ENCODE measurements at regions of chr3 and their contacts with region 1.

Region 1: GRCh38 chr3:149512209-149512782 is 37.8 kb downstream of the TM4SF4 start:
- DNase-seq: peak; percentile 69
- H3K4me3 Mint-ChIP-seq: no peak overlapping the region
- H3K27ac Mint-ChIP-seq: no peak overlapping the region
- H3K4me1 Mint-ChIP-seq: peaks cover 9% of the 10 kb centered on the region
- H3K27me3 Mint-ChIP-seq: peaks cover 12% of the 10 kb centered on the region

Region 2: GRCh38 chr3:149340310-149340933 is 171.9 kb before region 1 on chr3:
- intact Hi-C with region 1: no loop called
- DNase-seq: no peak
- H3K4me3 Mint-ChIP-seq: no peak overlapping the region
- H3K27ac Mint-ChIP-seq: no peak overlapping the region
- H3K4me1 Mint-ChIP-seq: peaks cover 3% of the 10 kb centered on the region
- H3K27me3 Mint-ChIP-seq: peaks cover 15% of the 10 kb centered on the region

Region 3: DNA sequence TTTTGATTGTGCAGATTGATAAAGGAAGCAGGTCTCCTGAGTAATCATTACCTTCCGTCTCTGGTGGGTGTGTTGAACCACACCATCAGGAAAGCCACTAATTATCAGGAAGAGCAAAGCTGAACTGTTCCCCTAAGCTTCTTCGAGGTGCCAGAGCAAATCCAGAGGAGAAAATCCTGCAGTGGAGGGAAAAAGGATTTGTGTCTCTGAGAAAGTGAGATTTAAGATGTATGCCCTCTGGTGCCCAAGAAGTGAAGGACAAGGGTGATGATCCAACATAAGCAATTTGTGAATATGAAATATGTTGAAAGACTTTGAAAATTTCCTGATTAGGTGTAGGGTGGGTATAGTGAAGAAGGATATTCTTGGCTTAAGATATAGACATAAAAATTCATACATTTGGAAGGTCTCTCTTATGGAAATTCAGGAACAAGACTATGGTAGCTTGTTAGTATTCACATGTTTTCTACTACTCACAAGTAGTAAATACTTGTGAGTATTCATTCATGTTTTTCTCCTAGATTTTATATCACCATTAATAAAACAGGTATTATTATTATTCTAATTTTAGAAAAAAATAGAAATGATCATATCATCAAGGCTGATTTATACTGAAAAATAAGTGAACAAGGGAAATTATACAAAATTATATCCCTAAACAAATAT is 205.2 kb after region 1 on chr3:
- intact Hi-C with region 1: loop called (anchors 5 kb)
- DNase-seq: peak; percentile 77
- H3K4me3 Mint-ChIP-seq: no peak overlapping the region
- H3K27ac Mint-ChIP-seq: no peak overlapping the region
- H3K4me1 Mint-ChIP-seq: peaks cover 3% of the 10 kb centered on the region
- H3K27me3 Mint-ChIP-seq: peaks cover 7% of the 10 kb centered on the region

Region 4: DNA sequence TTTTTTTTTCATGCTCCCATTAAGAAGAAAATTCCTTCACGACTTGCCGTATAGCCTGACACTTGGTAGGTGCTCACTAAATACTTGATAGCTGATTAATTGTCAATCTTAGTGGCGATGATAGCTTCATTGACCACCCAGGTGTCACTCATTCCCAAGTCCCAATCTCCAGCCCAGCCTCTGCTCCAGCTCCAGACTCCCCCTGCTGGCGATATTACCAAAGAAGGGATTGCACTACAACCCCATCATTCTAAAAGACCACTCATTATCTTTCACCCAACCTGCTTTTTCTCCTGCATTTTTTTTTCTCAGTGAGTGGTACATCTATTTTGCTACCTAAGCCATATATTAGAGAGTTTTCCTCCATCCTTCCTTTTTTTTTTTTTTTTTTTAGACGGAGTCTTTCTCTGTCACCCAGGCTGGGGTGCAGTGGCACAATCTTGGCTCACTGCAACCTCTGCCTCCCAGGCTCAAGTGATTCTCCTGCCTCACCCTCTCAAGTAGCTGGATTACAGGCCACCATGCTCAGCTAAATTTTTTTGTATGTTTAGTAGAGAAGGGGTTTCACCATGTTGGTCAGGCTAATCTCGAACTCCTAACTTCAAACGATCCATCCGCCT is 259.5 kb after region 1 on chr3:
- intact Hi-C with region 1: loop called (anchors 5 kb)
- DNase-seq: peak; percentile 80
- H3K4me3 Mint-ChIP-seq: no peak overlapping the region
- H3K27ac Mint-ChIP-seq: no peak overlapping the region
- H3K4me1 Mint-ChIP-seq: no peaks in the 10 kb centered on the region
- H3K27me3 Mint-ChIP-seq: peaks cover 15% of the 10 kb centered on the region

Region 5: GRCh38 chr3:149812606-149813366 is 300.5 kb after region 1 on chr3 and contains the start of gene RNF13:
- intact Hi-C with region 1: loop called (anchors 5 kb)
- DNase-seq: peak; percentile 98
- H3K4me3 Mint-ChIP-seq: peak within 1 kb of the TSS; percentile 97
- H3K27ac Mint-ChIP-seq: peak within 1 kb of the TSS; percentile 100
- H3K4me1 Mint-ChIP-seq: peaks cover 44% of the 10 kb centered on the region
- H3K27me3 Mint-ChIP-seq: peaks cover 11% of the 10 kb centered on the region
- total RNA-seq, gene RNF13: 31.6 and 36.7 TPM in 2 replicates